Mucosa of descending colon (tissue), 3 donors: ENCODE measurements at regions of chr19 and their contacts with region 1.

Region 1: DNA sequence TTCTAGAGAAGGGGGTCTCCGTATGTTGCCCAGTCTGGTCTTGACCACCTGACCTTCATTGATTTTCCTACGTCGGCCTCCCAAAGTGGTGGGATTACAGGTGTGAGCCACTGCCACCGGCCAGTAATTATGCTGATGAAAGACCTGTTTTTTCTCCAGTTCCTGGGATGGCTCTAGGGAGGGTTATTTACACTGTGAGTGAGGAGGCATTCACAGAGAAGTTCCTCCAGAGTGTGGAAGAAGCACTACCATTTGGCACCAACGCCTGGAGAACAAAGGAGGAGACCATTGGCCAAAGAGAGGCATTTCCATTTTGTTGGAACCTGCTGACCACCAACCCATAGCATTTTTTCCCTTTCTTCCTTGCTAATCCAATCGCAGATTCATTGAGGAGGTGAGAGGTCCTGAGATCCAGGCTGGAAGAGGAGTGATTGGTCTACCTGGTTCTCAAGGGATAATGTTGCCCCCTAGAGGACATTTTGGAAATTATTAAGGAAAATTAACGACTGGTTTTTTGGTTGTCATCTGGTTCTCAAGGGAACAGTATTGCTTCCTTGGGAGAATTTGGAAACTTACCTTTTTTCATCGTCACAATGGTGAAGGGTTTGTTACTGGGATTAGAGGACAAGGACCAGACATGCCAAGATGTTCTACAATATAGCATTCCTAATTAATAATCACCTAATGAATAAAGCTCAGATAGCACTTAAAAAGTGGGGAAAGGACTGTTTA is 5.5 kb upstream of the SAE1 start:
- DNase-seq: no peak
- ATAC-seq: peak; percentile 95
- H3K4me3 ChIP-seq: no peak overlapping the region
- H3K4me1 ChIP-seq: no peaks in the 10 kb centered on the region
- CTCF ChIP-seq: no peak

Region 2: DNA sequence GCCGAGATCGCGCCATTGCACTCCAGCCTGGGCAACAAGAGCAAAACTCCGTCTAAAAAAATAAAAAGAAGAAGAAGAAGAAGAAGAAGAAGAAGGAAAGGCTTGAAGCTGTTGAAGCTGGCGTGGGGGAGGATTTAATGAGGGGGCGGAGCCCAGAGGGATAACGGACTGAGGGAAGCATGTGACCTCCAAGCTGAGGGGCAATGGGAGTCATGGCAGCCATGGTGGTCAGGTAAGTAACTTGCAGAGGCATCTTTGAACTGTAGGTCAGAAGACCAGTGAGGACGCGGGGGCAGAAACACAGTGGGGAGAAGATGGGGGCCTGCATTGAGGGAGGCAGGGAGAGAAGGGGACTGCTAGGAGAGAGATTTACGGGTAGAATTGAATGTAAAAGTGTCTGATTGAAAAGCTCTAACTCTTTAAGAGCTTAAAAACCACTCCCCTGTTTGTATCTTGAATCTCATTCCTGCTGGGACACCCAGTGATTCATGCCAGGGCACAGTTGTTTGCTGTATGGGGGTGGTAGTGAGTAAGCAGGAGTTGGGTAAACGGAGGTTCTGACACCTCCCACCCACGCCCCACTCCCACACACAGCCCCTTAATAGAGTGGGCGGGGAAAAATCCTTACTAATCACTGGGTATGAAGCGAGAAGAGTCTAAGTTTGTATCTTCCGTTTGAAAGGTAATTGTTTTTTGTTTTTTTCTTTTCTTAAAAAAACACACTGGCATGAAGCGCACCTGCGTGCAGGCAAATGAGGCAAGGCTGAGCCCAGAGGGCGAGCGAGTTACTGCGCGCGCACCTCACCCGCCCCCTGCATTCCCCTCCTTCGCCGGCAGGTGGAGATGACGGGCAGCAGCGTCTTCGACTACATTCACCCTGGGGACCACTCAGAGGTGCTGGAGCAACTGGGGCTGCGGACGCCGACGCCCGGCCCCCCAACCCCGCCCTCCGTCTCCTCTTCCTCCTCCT is 89.7 kb before region 1 on chr19:
- intact Hi-C with region 1: loop called in 1 of 2 experiments (anchors 10 kb)
- DNase-seq: peak; percentile 90 to 98 (median 97)
- ATAC-seq: peak; percentile 98
- H3K4me3 ChIP-seq: no peak overlapping the region
- H3K4me1 ChIP-seq: peaks cover 11% of the 10 kb centered on the region
- CTCF ChIP-seq: peak; percentile 98

Region 3: GRCh38 chr19:47075179-47075810 is 49.8 kb before region 1 on chr19:
- intact Hi-C with region 1: loop called (anchors 1 to 5 kb)
- DNase-seq: peak in 1 of 3 donors; percentile 50
- ATAC-seq: no peak
- H3K4me3 ChIP-seq: no peak overlapping the region
- H3K4me1 ChIP-seq: no peaks in the 10 kb centered on the region
- CTCF ChIP-seq: no peak

Region 4: GRCh38 chr19:47256688-47257443 is 131.8 kb after region 1 on chr19:
- intact Hi-C with region 1: no loop called
- DNase-seq: peak; percentile 100
- ATAC-seq: peak; percentile 83
- H3K4me3 ChIP-seq: peak overlapping the region; percentile 23
- H3K4me1 ChIP-seq: peaks cover 23% of the 10 kb centered on the region
- CTCF ChIP-seq: no peak